ENCODE measurements at regions of chr2 and their contacts with region 1.

Region 1: DNA sequence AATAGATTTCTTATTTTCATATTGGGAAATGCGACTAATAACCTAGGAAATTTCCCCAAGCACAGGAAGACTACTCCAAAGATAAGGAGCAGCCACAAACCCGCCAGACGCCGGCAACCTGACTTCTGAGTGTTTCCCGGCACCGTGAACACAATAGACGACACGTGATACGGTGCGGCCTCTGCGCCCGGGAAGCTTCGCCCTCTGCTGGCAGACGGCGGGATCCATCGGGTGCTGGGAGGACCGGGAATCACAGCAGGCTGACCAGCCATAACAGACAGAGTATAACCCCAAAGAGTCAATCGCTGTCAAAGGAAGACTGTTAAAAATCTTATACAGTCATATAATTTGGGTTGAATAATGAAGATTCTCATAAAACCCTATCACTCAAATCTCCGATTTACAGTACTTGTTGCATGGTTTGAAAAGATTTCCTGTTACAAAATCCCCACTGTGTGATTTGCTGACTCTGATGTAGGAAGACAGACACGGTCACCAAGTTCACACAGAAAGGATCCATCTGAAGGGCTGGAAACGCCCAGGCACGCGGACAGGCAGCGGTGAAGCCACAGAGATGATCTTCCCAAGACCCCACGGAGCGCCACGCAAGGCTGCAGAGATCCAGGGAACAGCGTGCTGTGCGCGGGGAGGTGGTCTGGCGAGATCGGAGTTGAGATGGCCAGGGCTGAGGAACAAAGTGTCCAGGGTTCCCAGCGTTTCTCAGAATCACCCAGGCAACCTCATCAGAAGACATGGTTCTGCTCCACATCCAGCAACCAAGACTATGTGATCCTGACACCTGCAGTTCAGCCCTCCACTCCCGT is 73.8 kb downstream of the EIPR1 start:
- DNase-seq: peak; percentile 72
- ATAC-seq: peak; percentile 94
- H3K4me3 ChIP-seq: peak overlapping the region in 1 of 5 experiments; percentile 25
- H3K4me3 Mint-ChIP-seq: peak overlapping the region; percentile 57
- H3K27ac ChIP-seq: peak overlapping the region in 1 of 2 donors; percentile 4
- H3K27ac Mint-ChIP-seq: peak overlapping the region; percentile 61
- H3K4me1 ChIP-seq: peaks cover 0 to 7% of the 10 kb centered on the region in 2 donors
- H3K4me1 Mint-ChIP-seq: peaks cover 11% of the 10 kb centered on the region
- H3K27me3 ChIP-seq: no peaks in the 10 kb centered on the region
- H3K27me3 Mint-ChIP-seq: no peaks in the 10 kb centered on the region
- CTCF ChIP-seq: peak; percentile 91

Region 2: GRCh38 chr2:2057125-2057721 is 1246.6 kb before region 1 on chr2:
- CTCF ChIA-PET with region 1: no interaction called
- POLR2A ChIA-PET with region 1: no interaction called
- intact Hi-C with region 1: no loop called
- DNase-seq: peak; percentile 15
- ATAC-seq: no peak
- H3K4me3 ChIP-seq: no peak overlapping the region
- H3K4me3 Mint-ChIP-seq: no peak overlapping the region
- H3K27ac ChIP-seq: no peak overlapping the region
- H3K27ac Mint-ChIP-seq: no peak overlapping the region
- H3K4me1 ChIP-seq: peaks cover 6 to 8% of the 10 kb centered on the region in 2 donors
- H3K4me1 Mint-ChIP-seq: peaks cover 9% of the 10 kb centered on the region
- H3K27me3 ChIP-seq: no peaks in the 10 kb centered on the region
- H3K27me3 Mint-ChIP-seq: no peaks in the 10 kb centered on the region
- CTCF ChIP-seq: no peak

Region 3: GRCh38 chr2:3114406-3115185 is 189.2 kb before region 1 on chr2:
- CTCF ChIA-PET with region 1: no interaction called
- POLR2A ChIA-PET with region 1: no interaction called
- intact Hi-C with region 1: no loop called
- DNase-seq: no peak
- ATAC-seq: no peak
- H3K4me3 ChIP-seq: no peak overlapping the region
- H3K4me3 Mint-ChIP-seq: no peak overlapping the region
- H3K27ac ChIP-seq: no peak overlapping the region
- H3K27ac Mint-ChIP-seq: no peak overlapping the region
- H3K4me1 ChIP-seq: no peaks in the 10 kb centered on the region
- H3K4me1 Mint-ChIP-seq: no peaks in the 10 kb centered on the region
- H3K27me3 ChIP-seq: no peaks in the 10 kb centered on the region
- H3K27me3 Mint-ChIP-seq: no peaks in the 10 kb centered on the region
- CTCF ChIP-seq: no peak

Region 4: DNA sequence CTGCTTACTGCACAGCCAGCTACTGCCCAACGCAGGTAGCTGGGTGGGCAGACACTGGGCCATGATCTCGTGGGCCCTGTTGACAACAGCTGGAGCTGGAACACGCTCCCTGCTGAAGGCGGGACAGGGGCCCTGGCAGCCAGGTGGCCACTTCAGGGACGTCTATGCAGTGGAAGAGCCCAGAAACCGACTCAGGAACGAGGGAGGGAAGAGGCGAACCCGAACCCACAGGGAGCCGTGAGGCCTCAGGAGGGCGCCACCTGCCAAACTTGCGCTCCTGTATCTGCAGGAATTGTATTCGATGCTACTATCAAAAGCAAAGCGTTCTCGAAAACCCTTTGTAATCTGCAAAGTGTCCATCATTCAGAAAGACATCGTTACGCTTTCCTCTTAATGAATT is 124.6 kb before region 1 on chr2:
- CTCF ChIA-PET with region 1: no interaction called
- POLR2A ChIA-PET with region 1: no interaction called
- intact Hi-C with region 1: loop called (anchors 10 kb)
- DNase-seq: no peak
- ATAC-seq: no peak
- H3K4me3 ChIP-seq: no peak overlapping the region
- H3K4me3 Mint-ChIP-seq: no peak overlapping the region
- H3K27ac ChIP-seq: no peak overlapping the region
- H3K27ac Mint-ChIP-seq: no peak overlapping the region
- H3K4me1 ChIP-seq: no peaks in the 10 kb centered on the region
- H3K4me1 Mint-ChIP-seq: no peaks in the 10 kb centered on the region
- H3K27me3 ChIP-seq: no peaks in the 10 kb centered on the region
- H3K27me3 Mint-ChIP-seq: no peaks in the 10 kb centered on the region
- CTCF ChIP-seq: no peak

Region 5: DNA sequence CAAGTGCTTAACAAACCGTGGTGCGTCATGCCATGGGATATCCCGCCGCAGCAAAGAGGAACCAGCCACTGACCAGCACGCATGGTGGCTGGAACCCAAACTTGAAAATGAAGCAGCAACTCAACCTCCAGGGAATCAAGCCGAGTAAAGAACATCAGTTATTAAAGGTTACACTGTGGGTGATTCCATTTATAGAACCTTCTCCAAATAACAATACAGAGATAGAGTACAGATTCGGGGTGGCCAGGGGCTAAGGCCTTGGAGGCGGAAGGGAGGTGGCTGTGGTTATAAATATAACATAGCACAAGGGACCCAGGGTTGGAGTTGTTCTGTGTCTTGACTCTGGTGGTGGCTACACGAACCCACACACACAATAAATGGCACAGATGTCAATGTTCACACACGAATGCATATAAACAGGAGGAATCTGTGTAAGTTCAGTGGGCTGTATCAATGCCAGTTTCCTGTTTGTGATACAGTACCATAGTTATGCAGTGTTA is 49.3 kb before region 1 on chr2:
- CTCF ChIA-PET with region 1: interaction called, 3 read pairs
- POLR2A ChIA-PET with region 1: no interaction called
- intact Hi-C with region 1: loop called (anchors 2 kb)
- DNase-seq: no peak
- ATAC-seq: peak; percentile 73
- H3K4me3 ChIP-seq: peak overlapping the region in 1 of 5 experiments; percentile 10
- H3K4me3 Mint-ChIP-seq: peak overlapping the region; percentile 70
- H3K27ac ChIP-seq: peak overlapping the region; percentile 15 to 70
- H3K27ac Mint-ChIP-seq: peak overlapping the region; percentile 87
- H3K4me1 ChIP-seq: peaks cover 42 to 45% of the 10 kb centered on the region in 2 donors
- H3K4me1 Mint-ChIP-seq: peaks cover 53% of the 10 kb centered on the region
- H3K27me3 ChIP-seq: no peaks in the 10 kb centered on the region
- H3K27me3 Mint-ChIP-seq: no peaks in the 10 kb centered on the region
- CTCF ChIP-seq: no peak